Naive thymus-derived CD4-positive, alpha-beta T cell (primary cell): ENCODE measurements at regions of chr13 and their contacts with region 1.

Region 1: DNA sequence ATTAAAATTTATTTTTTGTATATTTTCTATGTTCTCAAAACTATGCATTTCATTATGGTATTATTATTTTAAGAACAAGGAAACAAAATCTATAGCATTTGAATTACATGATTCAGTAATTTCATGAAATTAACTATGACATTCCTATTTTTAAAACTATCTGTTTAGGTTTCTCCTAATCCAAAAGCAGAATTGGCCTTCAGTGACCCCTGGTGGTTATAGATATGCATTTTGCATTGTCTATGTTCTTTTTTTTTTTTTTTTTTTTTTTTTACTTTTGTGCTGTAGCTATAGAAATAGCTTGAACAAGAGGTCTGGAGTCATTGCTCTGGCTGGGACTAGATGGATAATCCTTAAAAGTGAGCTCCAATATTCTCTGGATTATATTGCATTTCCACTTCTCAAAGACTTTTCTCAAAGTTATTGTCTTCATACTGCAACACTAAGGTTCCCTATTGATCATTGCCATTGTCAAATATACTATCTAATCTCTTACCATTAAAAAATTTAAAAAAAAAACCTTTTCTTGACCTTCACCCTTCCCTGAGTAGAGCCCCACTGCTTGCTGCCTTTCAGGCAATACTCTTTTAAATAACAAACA is 15.9 kb upstream of the DNAJC3 start:
- DNase-seq: peak in 4 of 9 donors; percentile 11 to 18 (median 16)
- ATAC-seq: no peak
- H3K4me3 ChIP-seq: no peak overlapping the region
- H3K4me3 Mint-ChIP-seq: no peak overlapping the region
- H3K27ac ChIP-seq: no peak overlapping the region
- H3K27ac Mint-ChIP-seq: no peak overlapping the region
- H3K4me1 ChIP-seq: no peaks in the 10 kb centered on the region
- H3K4me1 Mint-ChIP-seq: peaks cover 0 to 2% (median 0%) of the 10 kb centered on the region in 7 donors
- H3K27me3 ChIP-seq: no peaks in the 10 kb centered on the region
- H3K27me3 Mint-ChIP-seq: peaks cover 21 to 48% (median 27%) of the 10 kb centered on the region in 5 donors

Region 2: GRCh38 chr13:95007322-95007721 is 653.8 kb before region 1 on chr13:
- CTCF ChIA-PET with region 1: no interaction called
- POLR2A ChIA-PET with region 1: no interaction called
- intact Hi-C with region 1: no loop called
- DNase-seq: no peak
- ATAC-seq: no peak
- H3K4me3 ChIP-seq: no peak overlapping the region
- H3K4me3 Mint-ChIP-seq: no peak overlapping the region
- H3K27ac ChIP-seq: no peak overlapping the region
- H3K27ac Mint-ChIP-seq: no peak overlapping the region
- H3K4me1 ChIP-seq: no peaks in the 10 kb centered on the region
- H3K4me1 Mint-ChIP-seq: peaks cover 0 to 5% (median 0%) of the 10 kb centered on the region in 7 donors
- H3K27me3 ChIP-seq: no peaks in the 10 kb centered on the region
- H3K27me3 Mint-ChIP-seq: peaks cover 14 to 18% (median 16%) of the 10 kb centered on the region in 5 donors

Region 3: GRCh38 chr13:95536632-95537241 is 124.3 kb before region 1 on chr13:
- CTCF ChIA-PET with region 1: no interaction called
- POLR2A ChIA-PET with region 1: no interaction called
- intact Hi-C with region 1: loop called in 1 of 2 experiments (anchors 2 kb)
- DNase-seq: peak in 1 of 9 donors; percentile 10
- ATAC-seq: no peak
- H3K4me3 ChIP-seq: no peak overlapping the region
- H3K4me3 Mint-ChIP-seq: no peak overlapping the region
- H3K27ac ChIP-seq: no peak overlapping the region
- H3K27ac Mint-ChIP-seq: no peak overlapping the region
- H3K4me1 ChIP-seq: no peaks in the 10 kb centered on the region
- H3K4me1 Mint-ChIP-seq: peaks cover 0 to 6% (median 0%) of the 10 kb centered on the region in 7 donors
- H3K27me3 ChIP-seq: no peaks in the 10 kb centered on the region
- H3K27me3 Mint-ChIP-seq: peaks cover 20 to 38% (median 28%) of the 10 kb centered on the region in 5 donors

Region 4: DNA sequence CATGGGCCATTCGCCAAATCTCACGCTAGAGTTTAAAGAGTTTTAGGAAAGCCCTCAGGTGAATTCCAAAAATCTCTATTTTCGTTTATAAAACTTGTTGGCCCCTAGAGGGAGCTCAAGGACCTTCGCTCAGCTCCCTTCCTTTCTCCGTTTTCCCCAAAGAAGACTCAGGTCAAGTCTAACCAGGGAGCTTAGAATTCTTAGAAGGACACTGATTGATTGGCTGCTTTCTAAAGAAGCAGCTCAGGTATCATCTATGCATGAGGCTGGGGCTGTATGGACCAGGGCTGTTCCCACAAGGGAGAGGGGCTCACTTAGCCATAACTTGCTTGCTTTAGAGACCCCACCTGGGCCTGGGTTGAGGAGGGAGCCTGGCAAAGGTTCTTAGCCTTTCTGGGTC is 37.1 kb before region 1 on chr13:
- CTCF ChIA-PET with region 1: interaction called, 3 read pairs
- POLR2A ChIA-PET with region 1: no interaction called
- intact Hi-C with region 1: loop called (anchors 1 kb)
- DNase-seq: peak in 5 of 9 donors; percentile 18 to 42 (median 29)
- ATAC-seq: peak; percentile 56
- H3K4me3 ChIP-seq: no peak overlapping the region
- H3K4me3 Mint-ChIP-seq: no peak overlapping the region
- H3K27ac ChIP-seq: no peak overlapping the region
- H3K27ac Mint-ChIP-seq: no peak overlapping the region
- H3K4me1 ChIP-seq: no peaks in the 10 kb centered on the region
- H3K4me1 Mint-ChIP-seq: peaks cover 0 to 3% (median 0%) of the 10 kb centered on the region in 7 donors
- H3K27me3 ChIP-seq: no peaks in the 10 kb centered on the region
- H3K27me3 Mint-ChIP-seq: peaks cover 15 to 32% (median 20%) of the 10 kb centered on the region in 5 donors

Region 5: DNA sequence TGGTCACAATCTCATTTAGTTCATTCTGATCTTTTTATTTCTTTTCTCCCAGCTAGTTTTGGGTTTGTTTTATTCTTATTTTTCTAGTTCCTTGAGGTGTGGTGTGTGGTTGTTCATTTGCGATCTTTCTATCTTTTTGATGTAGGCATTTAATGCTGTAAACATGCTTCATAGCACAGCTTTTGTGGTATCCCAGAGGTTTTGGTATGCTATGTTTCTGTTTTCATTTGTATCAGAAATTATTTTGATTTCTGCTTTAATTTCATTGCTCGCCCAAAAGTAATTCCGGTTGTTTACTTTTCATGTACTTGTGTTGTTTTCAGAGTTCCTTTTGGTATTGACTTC is 28.5 kb after region 1 on chr13:
- CTCF ChIA-PET with region 1: no interaction called
- POLR2A ChIA-PET with region 1: no interaction called
- intact Hi-C with region 1: loop called in 1 of 2 experiments (anchors 1 kb)
- DNase-seq: no peak
- ATAC-seq: no peak
- H3K4me3 ChIP-seq: no peak overlapping the region
- H3K4me3 Mint-ChIP-seq: peak overlapping the region in 6 of 10 donors; percentile 1 to 37 (median 19)
- H3K27ac ChIP-seq: no peak overlapping the region
- H3K27ac Mint-ChIP-seq: peak overlapping the region in 4 of 9 donors; percentile 6 to 52 (median 22)
- H3K4me1 ChIP-seq: peaks cover 4 to 11% of the 10 kb centered on the region in 2 donors
- H3K4me1 Mint-ChIP-seq: peaks cover 27 to 52% (median 45%) of the 10 kb centered on the region in 7 donors
- H3K27me3 ChIP-seq: no peaks in the 10 kb centered on the region
- H3K27me3 Mint-ChIP-seq: no peaks in the 10 kb centered on the region